CD4-positive, alpha-beta T cell (primary cell): ENCODE measurements at regions of chr17 and their contacts with region 1.

Region 1: GRCh38 chr17:61026818-61027217 is 349.2 kb downstream of the BCAS3 start:
- DNase-seq: no peak
- ATAC-seq: no peak
- H3K4me3 ChIP-seq: no peak overlapping the region
- H3K4me3 Mint-ChIP-seq: no peak overlapping the region
- H3K27ac ChIP-seq: no peak overlapping the region
- H3K27ac Mint-ChIP-seq: no peak overlapping the region
- H3K4me1 ChIP-seq: no peaks in the 10 kb centered on the region
- H3K4me1 Mint-ChIP-seq: peaks cover 7% of the 10 kb centered on the region
- H3K27me3 ChIP-seq: no peaks in the 10 kb centered on the region
- H3K27me3 Mint-ChIP-seq: no peaks in the 10 kb centered on the region
- CTCF ChIP-seq: no peak

Region 2: DNA sequence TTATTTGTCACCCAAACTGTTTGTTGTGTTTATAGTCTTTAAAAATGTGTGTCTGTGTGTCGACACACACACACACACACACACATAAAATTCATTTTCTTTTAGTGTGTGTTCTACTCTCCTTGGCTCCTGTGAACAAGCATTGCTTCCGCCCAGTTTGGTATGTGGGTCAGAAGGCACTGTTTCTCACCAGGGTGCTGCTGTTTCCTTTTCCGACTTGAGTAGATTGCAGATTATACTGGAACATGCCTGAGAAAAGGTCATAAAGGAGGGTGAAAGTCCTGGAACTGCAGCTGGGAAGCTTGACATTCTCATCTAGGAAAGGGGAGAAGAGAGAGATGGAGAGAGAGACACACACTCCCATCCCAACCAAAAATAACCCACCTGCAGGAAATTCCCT is 18.8 kb before region 1 on chr17:
- CTCF ChIA-PET with region 1: interaction called, 5 read pairs
- POLR2A ChIA-PET with region 1: no interaction called
- intact Hi-C with region 1: loop called in 1 of 2 experiments (anchors 2 kb)
- DNase-seq: no peak
- ATAC-seq: no peak
- H3K4me3 ChIP-seq: no peak overlapping the region
- H3K4me3 Mint-ChIP-seq: no peak overlapping the region
- H3K27ac ChIP-seq: no peak overlapping the region
- H3K27ac Mint-ChIP-seq: no peak overlapping the region
- H3K4me1 ChIP-seq: no peaks in the 10 kb centered on the region
- H3K4me1 Mint-ChIP-seq: no peaks in the 10 kb centered on the region
- H3K27me3 ChIP-seq: no peaks in the 10 kb centered on the region
- H3K27me3 Mint-ChIP-seq: no peaks in the 10 kb centered on the region
- CTCF ChIP-seq: no peak